Head of caudate nucleus (tissue), 42 donors: ENCODE measurements at regions of chr5 and their contacts with region 1.

Region 1: DNA sequence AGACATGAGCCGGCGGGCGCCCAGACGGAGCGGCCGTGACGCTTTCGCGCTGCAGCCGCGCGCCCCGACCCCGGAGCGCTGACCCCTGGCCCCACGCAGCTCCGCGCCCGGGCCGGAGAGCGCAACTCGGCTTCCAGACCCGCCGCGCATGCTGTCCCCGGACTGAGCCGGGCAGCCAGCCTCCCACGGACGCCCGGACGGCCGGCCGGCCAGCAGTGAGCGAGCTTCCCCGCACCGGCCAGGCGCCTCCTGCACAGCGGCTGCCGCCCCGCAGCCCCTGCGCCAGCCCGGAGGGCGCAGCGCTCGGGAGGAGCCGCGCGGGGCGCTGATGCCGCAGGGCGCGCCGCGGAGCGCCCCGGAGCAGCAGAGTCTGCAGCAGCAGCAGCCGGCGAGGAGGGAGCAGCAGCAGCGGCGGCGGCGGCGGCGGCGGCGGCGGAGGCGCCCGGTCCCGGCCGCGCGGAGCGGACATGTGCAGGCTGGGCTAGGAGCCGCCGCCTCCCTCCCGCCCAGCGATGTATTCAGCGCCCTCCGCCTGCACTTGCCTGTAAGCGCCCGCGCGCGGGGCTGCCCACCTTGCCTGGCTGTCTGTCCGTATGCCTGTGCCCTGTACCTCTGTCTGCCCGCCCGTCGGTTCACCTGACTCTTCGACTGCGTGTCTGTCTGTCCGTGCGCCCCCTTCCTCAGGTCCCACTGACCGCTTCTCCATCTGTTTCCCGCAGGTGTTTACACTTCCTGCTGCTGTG is 412 bp downstream of the FGF18 start:
- DNase-seq: peak in 26 of 42 donors; percentile 7 to 54 (median 32)

Region 2: GRCh38 chr5:171462928-171463862 is 43.3 kb after region 1 on chr5:
- intact Hi-C with region 1: no loop called
- DNase-seq: no peak

Region 3: GRCh38 chr5:171907725-171908343 is 488.0 kb after region 1 on chr5:
- intact Hi-C with region 1: loop called (anchors 5 kb)
- DNase-seq: peak in 27 of 42 donors; percentile 7 to 79 (median 43)

Region 4: GRCh38 chr5:172533399-172534228 is 1113.8 kb after region 1 on chr5:
- intact Hi-C with region 1: no loop called
- DNase-seq: peak in 2 of 42 donors; percentile 15 to 29